Gastrocnemius medialis (tissue), 4 donors: ENCODE measurements at regions of chr7 and their contacts with region 1.

Region 1: GRCh38 chr7:76191783-76192275 is 9.9 kb upstream of the SRRM3 start:
- DNase-seq: no peak
- ATAC-seq: no peak
- H3K4me3 ChIP-seq: no peak overlapping the region
- H3K27ac ChIP-seq: no peak overlapping the region
- H3K4me1 ChIP-seq: no peaks in the 10 kb centered on the region
- H3K27me3 ChIP-seq: no peaks in the 10 kb centered on the region
- CTCF ChIP-seq: no peak
- POLR2A ChIP-seq: no peak

Region 2: DNA sequence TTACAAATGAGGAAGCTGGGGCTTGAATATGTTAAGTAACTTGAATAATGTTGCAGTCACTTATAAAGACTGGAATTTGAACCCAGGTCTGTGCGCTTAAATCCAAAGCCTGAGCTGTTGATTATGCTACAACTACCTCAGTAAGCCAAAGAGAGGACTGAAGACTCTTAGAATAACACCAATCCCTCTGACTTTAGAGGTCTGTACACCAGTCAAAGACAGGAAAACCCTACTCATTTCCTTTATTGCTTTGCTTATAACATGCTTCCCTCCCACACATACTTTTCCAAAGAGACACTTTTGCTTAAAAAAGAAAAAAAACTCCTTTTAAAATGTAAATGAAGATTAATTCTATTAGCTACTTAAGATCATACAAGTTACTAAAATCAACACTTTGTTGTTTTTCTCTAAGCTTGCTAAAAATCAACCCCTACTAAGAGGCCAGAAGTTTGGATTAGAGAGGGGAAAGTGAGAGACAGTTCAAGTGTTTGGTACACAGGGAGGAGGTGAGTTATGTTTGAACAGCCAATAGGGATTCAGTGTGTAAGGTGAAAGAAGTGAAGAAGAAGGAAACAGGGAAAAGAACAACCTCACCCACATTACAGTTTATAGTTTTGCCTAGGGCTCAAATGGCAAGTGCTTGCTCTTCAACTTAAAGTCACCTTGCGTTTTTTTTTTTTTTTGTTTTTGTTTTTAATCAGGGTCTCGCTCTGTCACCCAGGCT is 69.2 kb before region 1 on chr7:
- in situ Hi-C with region 1: no loop called
- intact Hi-C with region 1: no loop called
- DNase-seq: no peak
- ATAC-seq: no peak
- H3K4me3 ChIP-seq: no peak overlapping the region
- H3K27ac ChIP-seq: no peak overlapping the region
- H3K4me1 ChIP-seq: no peaks in the 10 kb centered on the region
- H3K27me3 ChIP-seq: no peaks in the 10 kb centered on the region
- CTCF ChIP-seq: no peak
- POLR2A ChIP-seq: no peak

Region 3: GRCh38 chr7:76428868-76429760 is 237.3 kb after region 1 on chr7:
- in situ Hi-C with region 1: loop called in 1 of 4 experiments (anchors 25 kb)
- intact Hi-C with region 1: no loop called
- DNase-seq: peak in 1 of 2 donors; percentile 28
- ATAC-seq: no peak
- H3K4me3 ChIP-seq: no peak overlapping the region
- H3K27ac ChIP-seq: no peak overlapping the region
- H3K4me1 ChIP-seq: no peaks in the 10 kb centered on the region
- H3K27me3 ChIP-seq: no peaks in the 10 kb centered on the region
- CTCF ChIP-seq: no peak
- POLR2A ChIP-seq: no peak